Activated B cell treated with CpG ODN at 0.5 μM for 24 hours (primary cell): ENCODE measurements at regions of chr3 and their contacts with region 1.

Region 1: GRCh38 chr3:43503067-43503728 is 118.6 kb downstream of the ANO10 start:
- DNase-seq: no peak
- ATAC-seq: no peak
- H3K4me3 Mint-ChIP-seq: no peak overlapping the region
- H3K27ac Mint-ChIP-seq: no peak overlapping the region
- H3K4me1 Mint-ChIP-seq: no peaks in the 10 kb centered on the region
- H3K27me3 Mint-ChIP-seq: no peaks in the 10 kb centered on the region
- CTCF ChIP-seq: no peak

Region 2: DNA sequence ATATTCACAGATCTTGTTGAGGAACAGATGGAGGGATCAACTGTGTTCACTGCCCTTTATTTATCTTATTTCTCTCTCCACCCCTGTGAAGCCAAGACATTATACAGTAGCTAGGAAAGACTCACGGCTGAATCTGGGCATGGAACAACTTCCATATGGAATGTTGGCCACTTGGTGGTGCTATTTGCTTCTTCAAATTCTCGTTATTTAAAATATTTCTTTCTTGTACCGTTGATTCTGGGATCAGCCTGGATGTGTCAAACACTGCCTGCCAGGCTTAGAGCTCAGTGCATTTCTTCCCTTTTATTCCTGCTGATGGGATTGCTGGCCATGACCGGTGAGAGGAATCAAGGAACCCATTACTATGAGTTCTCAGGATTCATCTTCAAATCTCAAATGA is 541.6 kb before region 1 on chr3:
- CTCF ChIA-PET with region 1: interaction called, 25 read pairs
- POLR2A ChIA-PET with region 1: no interaction called
- intact Hi-C with region 1: loop called (anchors 1 kb)
- DNase-seq: no peak
- ATAC-seq: no peak
- H3K4me3 Mint-ChIP-seq: no peak overlapping the region
- H3K27ac Mint-ChIP-seq: no peak overlapping the region
- H3K4me1 Mint-ChIP-seq: no peaks in the 10 kb centered on the region
- H3K27me3 Mint-ChIP-seq: peaks cover 15% of the 10 kb centered on the region
- CTCF ChIP-seq: no peak

Region 3: DNA sequence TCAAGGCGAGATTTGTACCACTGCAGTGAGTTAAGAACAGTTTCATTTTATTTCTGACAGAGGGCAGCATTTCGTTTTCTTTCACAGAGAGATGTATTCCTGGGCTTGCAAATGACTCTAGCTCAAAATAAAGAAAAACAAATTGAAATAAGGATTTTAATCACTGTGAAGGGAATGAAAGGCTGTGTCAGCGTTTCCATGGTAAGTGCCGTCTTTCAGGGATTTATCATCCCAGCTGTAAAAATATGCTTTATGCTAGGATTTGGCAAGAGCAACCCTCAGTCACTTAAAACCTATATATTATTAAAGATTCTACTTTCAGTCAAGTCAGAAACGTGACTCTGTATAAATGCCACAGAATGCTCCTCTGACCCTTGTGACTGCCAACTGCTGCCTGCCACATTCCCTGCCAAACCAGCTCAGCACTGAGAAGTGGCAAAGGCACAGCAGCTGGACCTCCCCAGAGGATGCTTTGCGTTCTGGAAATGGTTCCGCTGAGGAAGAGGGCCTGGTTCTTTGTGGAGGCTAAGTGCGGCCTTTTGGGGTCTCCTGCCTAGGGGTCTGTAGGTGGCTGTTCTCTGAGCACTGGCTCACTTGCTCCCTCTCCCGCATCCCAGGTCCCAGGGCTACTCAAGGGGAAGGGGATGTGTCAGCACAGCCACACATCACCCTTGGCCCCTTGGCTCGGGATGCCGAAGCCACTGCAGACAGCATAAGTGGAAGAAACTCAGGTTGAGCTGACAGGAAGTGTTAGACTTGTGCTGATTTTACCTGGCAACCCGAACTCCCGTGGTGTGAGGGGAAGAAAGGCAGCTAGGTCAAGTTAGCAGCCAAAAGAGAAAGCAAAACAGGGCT is 340.7 kb before region 1 on chr3:
- CTCF ChIA-PET with region 1: interaction called, 3 read pairs
- POLR2A ChIA-PET with region 1: no interaction called
- intact Hi-C with region 1: loop called (anchors 1 kb)
- DNase-seq: no peak
- ATAC-seq: no peak
- H3K4me3 Mint-ChIP-seq: no peak overlapping the region
- H3K27ac Mint-ChIP-seq: no peak overlapping the region
- H3K4me1 Mint-ChIP-seq: peaks cover 4% of the 10 kb centered on the region
- H3K27me3 Mint-ChIP-seq: peaks cover 11% of the 10 kb centered on the region
- CTCF ChIP-seq: no peak